H1 (cell line): ENCODE measurements at regions of chr2 and their contacts with region 1.

Region 1: GRCh38 chr2:240810207-240810606 is 9.8 kb downstream of the KIF1A start:
- DNase-seq: no peak
- H3K4me3 ChIP-seq: no peak overlapping the region
- H3K27ac ChIP-seq: no peak overlapping the region
- H3K4me1 ChIP-seq: peaks cover 0 to 5% (median 0%) of the 10 kb centered on the region in 4 experiments; a peak in 3 of 7 replicates
- H3K27me3 ChIP-seq: no peaks in the 10 kb centered on the region
- CTCF ChIP-seq: no peak
- EP300 ChIP-seq: no peak
- POLR2A ChIP-seq: no peak
- RAD21 ChIP-seq: no peak

Region 2: DNA sequence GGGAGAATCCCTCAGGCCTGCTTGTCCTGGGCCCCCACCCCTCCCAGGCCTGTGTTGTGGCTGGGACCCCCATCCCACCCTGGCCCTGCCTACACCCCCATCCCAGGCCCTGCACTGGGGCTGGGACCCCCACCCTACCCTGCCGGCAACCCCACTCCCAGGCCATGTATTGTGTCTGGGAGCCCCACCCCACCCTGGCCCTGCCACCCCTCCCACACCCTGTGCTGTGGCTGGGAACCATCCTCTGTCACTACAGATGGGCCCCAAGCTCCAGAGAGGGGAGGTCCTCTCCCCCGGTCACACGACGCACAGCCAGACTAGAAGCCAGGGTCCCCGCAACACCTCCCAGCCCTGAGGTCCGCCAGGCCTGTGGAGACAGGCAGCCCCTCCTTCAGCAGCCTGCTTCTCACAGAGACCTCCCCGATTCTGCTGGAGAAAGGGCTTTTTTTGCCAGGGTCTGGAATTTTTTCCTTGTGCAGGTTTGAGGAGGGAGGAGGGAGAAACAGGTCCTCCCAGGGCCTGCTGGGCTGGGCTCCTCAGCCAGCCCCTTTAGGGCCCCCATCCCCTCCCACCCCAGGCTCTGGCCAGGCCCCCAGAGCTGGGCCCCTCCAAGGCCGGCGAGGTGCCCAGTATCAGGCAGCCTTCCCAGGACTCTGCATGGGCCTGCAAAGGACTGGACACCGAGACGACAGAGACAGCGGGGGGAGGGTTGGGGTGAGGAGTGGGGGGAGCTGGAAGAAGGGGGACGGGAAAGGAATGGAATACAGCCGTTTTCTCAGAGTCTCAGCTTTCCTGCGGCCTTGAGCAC is 18.2 kb before region 1 on chr2:
- CTCF ChIA-PET with region 1: interaction called, 4 read pairs
- POLR2A ChIA-PET with region 1: interaction called, 11 read pairs
- DNase-seq: no peak
- H3K4me3 ChIP-seq: no peak overlapping the region
- H3K27ac ChIP-seq: no peak overlapping the region
- H3K4me1 ChIP-seq: peaks cover 0 to 11% (median 8%) of the 10 kb centered on the region in 4 experiments; a peak in 5 of 7 replicates
- H3K27me3 ChIP-seq: no peaks in the 10 kb centered on the region
- CTCF ChIP-seq: no peak
- EP300 ChIP-seq: no peak
- POLR2A ChIP-seq: no peak
- RAD21 ChIP-seq: no peak

Region 3: DNA sequence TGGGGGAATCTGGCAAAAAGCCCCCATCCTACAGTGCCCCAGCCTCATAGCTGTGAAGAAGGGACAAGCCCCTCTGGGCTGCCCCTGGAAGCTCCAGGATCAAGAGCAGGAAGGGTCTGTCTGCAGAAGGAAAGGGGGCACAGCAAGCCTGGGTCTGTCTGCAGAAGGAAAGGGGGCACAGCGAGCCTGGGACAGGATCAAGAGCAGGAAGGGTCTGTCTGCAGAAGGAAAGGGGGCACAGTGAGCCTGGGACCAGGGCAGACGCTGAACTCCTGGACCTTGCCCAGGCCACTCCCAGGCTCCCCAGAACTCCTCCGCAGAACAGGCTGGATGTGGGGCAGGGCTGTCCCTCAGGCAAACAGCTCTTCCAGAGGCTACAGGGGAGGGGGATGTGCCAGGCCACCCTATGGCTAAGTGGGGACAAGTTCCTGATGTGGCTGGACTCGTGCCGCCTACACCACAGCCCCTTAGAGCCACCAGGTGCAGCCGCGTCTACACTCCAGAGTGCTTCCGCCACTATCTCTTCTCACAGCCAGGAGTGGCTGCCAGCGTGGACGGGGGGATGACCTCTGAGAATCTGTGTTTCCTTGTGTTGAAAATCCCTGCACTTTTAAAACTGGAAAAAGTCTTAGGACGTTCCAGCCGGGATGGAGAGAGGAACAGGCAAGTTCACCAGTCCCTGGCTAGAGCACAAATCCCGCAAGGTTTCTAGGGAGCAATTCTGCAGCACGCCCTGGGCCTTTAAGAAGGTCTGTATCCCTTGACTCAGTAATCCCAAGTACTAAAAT is 11.0 kb before region 1 on chr2:
- CTCF ChIA-PET with region 1: interaction called, 4 read pairs
- POLR2A ChIA-PET with region 1: interaction called, 11 read pairs
- DNase-seq: no peak
- H3K4me3 ChIP-seq: no peak overlapping the region
- H3K27ac ChIP-seq: no peak overlapping the region; the same call in 1 of the 2 replicates
- H3K4me1 ChIP-seq: no peaks in the 10 kb centered on the region; a peak in 1 of 7 replicates
- H3K27me3 ChIP-seq: no peaks in the 10 kb centered on the region
- CTCF ChIP-seq: no peak
- EP300 ChIP-seq: no peak
- POLR2A ChIP-seq: no peak
- RAD21 ChIP-seq: no peak

Region 4: DNA sequence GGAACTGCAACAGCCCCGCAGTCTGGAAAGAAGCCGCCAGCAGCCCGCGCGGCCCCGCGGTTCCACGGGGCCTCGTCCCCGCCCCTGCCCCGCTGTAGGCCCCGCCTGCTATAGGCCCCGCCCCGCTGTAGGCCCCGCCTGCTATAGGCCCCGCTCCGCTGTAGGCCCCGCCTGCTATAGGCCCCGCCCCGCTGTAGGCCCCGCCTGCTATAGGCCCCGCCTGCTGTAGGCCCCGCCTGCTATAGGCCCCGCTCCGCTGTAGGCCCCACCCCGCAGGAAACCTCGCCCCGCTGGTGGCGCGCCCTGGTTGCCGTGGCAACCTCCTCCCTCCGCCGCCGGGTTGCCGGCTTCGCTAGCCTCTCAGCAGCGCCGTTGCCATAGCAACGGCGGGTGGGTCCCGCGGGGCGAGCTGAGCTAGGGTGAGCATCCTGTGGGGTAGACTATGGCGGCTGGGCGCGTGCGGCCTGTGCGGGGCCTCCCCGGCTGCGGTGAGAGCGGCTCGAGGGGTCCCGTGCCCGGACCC is 22.1 kb after region 1 on chr2:
- CTCF ChIA-PET with region 1: interaction called, 3 read pairs
- POLR2A ChIA-PET with region 1: interaction called, 12 read pairs
- DNase-seq: peak; percentile 91 to 98
- H3K4me3 ChIP-seq: peak overlapping the region; percentile 53 to 72 (median 60); a peak in 7 of 8 replicates
- H3K27ac ChIP-seq: no peak overlapping the region
- H3K4me1 ChIP-seq: peaks cover 0 to 2% (median 0%) of the 10 kb centered on the region in 4 experiments; a peak in 1 of 7 replicates
- H3K27me3 ChIP-seq: peaks cover 0 to 17% (median 12%) of the 10 kb centered on the region in 4 experiments; a peak in 5 of 7 replicates
- CTCF ChIP-seq: no peak
- EP300 ChIP-seq: no peak
- POLR2A ChIP-seq: no peak
- RAD21 ChIP-seq: no peak